Panc1 (cell line): ENCODE measurements at regions of chr4 and their contacts with region 1.

Region 1: GRCh38 chr4:78951862-78952472 is 12.7 kb upstream of the PAQR3 start:
- DNase-seq: peak; percentile 15
- ATAC-seq: no peak
- H3K4me3 ChIP-seq: no peak overlapping the region
- H3K27ac ChIP-seq: no peak overlapping the region
- H3K4me1 ChIP-seq: no peaks in the 10 kb centered on the region
- H3K27me3 ChIP-seq: no peaks in the 10 kb centered on the region
- CTCF ChIP-seq: peak; percentile 61; the same call in 1 of the 2 replicates

Region 2: GRCh38 chr4:79576429-79576753 is 624.4 kb after region 1 on chr4:
- CTCF ChIA-PET with region 1: no interaction called
- POLR2A ChIA-PET with region 1: no interaction called
- in situ Hi-C with region 1: no loop called
- intact Hi-C with region 1: loop called (anchors 2 kb)
- DNase-seq: peak; percentile 1
- ATAC-seq: peak; percentile 84
- H3K4me3 ChIP-seq: no peak overlapping the region
- H3K27ac ChIP-seq: no peak overlapping the region
- H3K4me1 ChIP-seq: no peaks in the 10 kb centered on the region
- H3K27me3 ChIP-seq: no peaks in the 10 kb centered on the region
- CTCF ChIP-seq: peak; percentile 64

Region 3: GRCh38 chr4:80215449-80216052 is 1263.6 kb after region 1 on chr4:
- CTCF ChIA-PET with region 1: no interaction called
- POLR2A ChIA-PET with region 1: no interaction called
- in situ Hi-C with region 1: no loop called
- intact Hi-C with region 1: loop called (anchors 5 kb)
- DNase-seq: no peak
- ATAC-seq: no peak
- H3K4me3 ChIP-seq: no peak overlapping the region
- H3K27ac ChIP-seq: no peak overlapping the region
- H3K4me1 ChIP-seq: no peaks in the 10 kb centered on the region
- H3K27me3 ChIP-seq: no peaks in the 10 kb centered on the region
- CTCF ChIP-seq: peak; percentile 58; the same call in 1 of the 2 replicates

Region 4: DNA sequence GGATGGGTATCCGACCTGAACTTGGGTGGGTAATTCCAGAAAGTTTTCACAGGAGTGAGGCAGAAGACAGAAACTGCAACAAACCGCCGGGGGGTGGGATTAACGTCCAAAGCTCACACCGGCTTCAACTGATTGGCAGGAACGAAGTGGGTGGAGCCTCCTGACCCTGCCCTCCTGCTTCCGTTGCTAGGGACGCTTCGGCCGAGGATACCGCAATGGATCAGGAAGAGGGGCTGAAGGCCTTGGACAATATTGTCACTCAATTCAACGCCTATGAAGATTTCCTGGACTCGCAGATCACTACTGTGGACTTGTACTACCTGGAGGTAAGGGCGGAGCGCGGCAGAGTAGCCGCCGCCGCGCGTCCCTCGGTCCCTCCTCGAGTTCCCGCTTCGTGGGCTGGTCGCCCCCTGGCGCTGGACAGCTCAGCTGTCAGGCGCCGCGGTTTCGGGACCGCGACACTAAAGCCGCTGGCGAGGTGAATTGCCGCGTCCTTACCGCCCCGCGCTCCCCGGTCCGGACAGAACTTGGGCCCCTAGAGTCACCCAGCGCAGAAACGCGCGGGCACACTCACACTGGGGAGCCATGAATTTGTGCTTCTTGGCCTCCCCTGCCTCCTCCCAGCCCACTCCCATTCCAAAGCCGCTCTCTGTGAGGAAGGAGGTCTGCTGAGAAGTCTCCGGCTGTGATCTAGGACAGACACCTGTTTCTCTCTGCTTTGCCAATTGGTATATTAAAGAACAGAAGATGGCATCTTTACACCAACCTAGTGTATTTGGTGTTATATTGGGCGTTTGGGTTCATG is 1383.8 kb after region 1 on chr4 and contains the start of gene CFAP299:
- CTCF ChIA-PET with region 1: interaction called, 3 read pairs
- POLR2A ChIA-PET with region 1: no interaction called
- in situ Hi-C with region 1: no loop called
- intact Hi-C with region 1: loop called (anchors 5 kb)
- DNase-seq: peak; percentile 73
- ATAC-seq: peak; percentile 99
- H3K4me3 ChIP-seq: peak within 1 kb of the TSS; percentile 58 to 67
- H3K27ac ChIP-seq: peak within 1 kb of the TSS; percentile 76
- H3K4me1 ChIP-seq: no peaks in the 10 kb centered on the region
- H3K27me3 ChIP-seq: no peaks in the 10 kb centered on the region
- CTCF ChIP-seq: peak; percentile 72
- total RNA-seq, gene CFAP299: not detected